ENCODE measurements at regions of chr9 and their contacts with region 1.

Region 1: GRCh38 chr9:119004620-119004994 is 364.6 kb downstream of the BRINP1 start:
- DNase-seq: peak; percentile 76 to 82
- ATAC-seq: peak; percentile 92
- H3K4me3 ChIP-seq: no peak overlapping the region
- H3K27ac ChIP-seq: peak overlapping the region; percentile 94 to 95
- H3K4me1 ChIP-seq: peaks cover 0 to 3% of the 10 kb centered on the region in 2 donors
- H3K27me3 ChIP-seq: no peaks in the 10 kb centered on the region

Region 2: GRCh38 chr9:118577121-118577520 is 427.5 kb before region 1 on chr9:
- intact Hi-C with region 1: loop called in 1 of 2 experiments (anchors 10 kb)
- DNase-seq: no peak
- ATAC-seq: no peak
- H3K4me3 ChIP-seq: no peak overlapping the region
- H3K27ac ChIP-seq: no peak overlapping the region
- H3K4me1 ChIP-seq: no peaks in the 10 kb centered on the region
- H3K27me3 ChIP-seq: no peaks in the 10 kb centered on the region

Region 3: DNA sequence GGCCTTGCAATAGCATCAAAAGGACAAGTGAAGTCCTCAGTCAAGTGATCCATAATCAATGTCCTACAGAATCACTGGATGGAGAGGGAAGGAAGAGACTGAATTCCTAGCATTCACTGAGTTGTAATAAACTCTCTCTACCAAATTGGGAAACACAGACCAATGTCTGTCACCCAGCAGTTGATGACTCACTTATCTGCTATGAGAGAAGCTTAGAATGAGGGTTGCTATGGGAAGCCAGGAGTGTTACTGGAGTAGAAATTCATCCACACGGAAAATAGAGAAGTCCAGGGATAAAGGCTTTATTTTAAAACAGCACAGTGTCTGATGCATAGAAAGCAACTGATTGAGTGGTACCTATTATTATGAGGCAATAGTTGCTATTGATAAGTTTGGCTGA is 42.8 kb before region 1 on chr9:
- intact Hi-C with region 1: loop called in 1 of 2 experiments (anchors 5 kb)
- DNase-seq: no peak
- ATAC-seq: peak; percentile 67
- H3K4me3 ChIP-seq: no peak overlapping the region
- H3K27ac ChIP-seq: no peak overlapping the region
- H3K4me1 ChIP-seq: no peaks in the 10 kb centered on the region
- H3K27me3 ChIP-seq: no peaks in the 10 kb centered on the region

Region 4: GRCh38 chr9:119026120-119026519 is 21.5 kb after region 1 on chr9:
- intact Hi-C with region 1: loop called (anchors 2 kb)
- DNase-seq: peak; percentile 80
- ATAC-seq: peak; percentile 88
- H3K4me3 ChIP-seq: no peak overlapping the region
- H3K27ac ChIP-seq: peak overlapping the region; percentile 92 to 98
- H3K4me1 ChIP-seq: peaks cover 0 to 6% of the 10 kb centered on the region in 2 donors
- H3K27me3 ChIP-seq: no peaks in the 10 kb centered on the region

Region 5: GRCh38 chr9:119050281-119050680 is 45.7 kb after region 1 on chr9:
- intact Hi-C with region 1: no loop called
- DNase-seq: no peak
- ATAC-seq: no peak
- H3K4me3 ChIP-seq: no peak overlapping the region
- H3K27ac ChIP-seq: no peak overlapping the region
- H3K4me1 ChIP-seq: peaks cover 0 to 9% of the 10 kb centered on the region in 2 donors
- H3K27me3 ChIP-seq: no peaks in the 10 kb centered on the region

Region 6: GRCh38 chr9:119060629-119061385 is 56.2 kb after region 1 on chr9:
- intact Hi-C with region 1: no loop called
- DNase-seq: no peak
- ATAC-seq: no peak
- H3K4me3 ChIP-seq: no peak overlapping the region
- H3K27ac ChIP-seq: no peak overlapping the region
- H3K4me1 ChIP-seq: no peaks in the 10 kb centered on the region
- H3K27me3 ChIP-seq: no peaks in the 10 kb centered on the region